K562 (cell line): ENCODE measurements at regions of chr1 and their contacts with region 1.

Region 1: GRCh38 chr1:44377925-44378784 is 23.1 kb upstream of the ERI3 start:
- DNase-seq: peak; percentile 60 to 74 (median 68)
- ATAC-seq: peak; percentile 89
- H3K4me3 ChIP-seq: no peak overlapping the region
- H3K27ac ChIP-seq: no peak overlapping the region
- H3K4me1 ChIP-seq: no peaks in the 10 kb centered on the region
- H3K27me3 ChIP-seq: peaks cover 4 to 26% of the 10 kb centered on the region in 2 experiments; a peak in 4 of 5 replicates
- CTCF ChIP-seq: peak; percentile 87 to 95 (median 87)
- EP300 ChIP-seq: no peak
- POLR2A ChIP-seq: no peak
- RAD21 ChIP-seq: peak; percentile 83 to 95

Region 2: GRCh38 chr1:44089371-44090049 is 288.6 kb before region 1 on chr1:
- CTCF ChIA-PET with region 1: no interaction called
- POLR2A ChIA-PET with region 1: no interaction called
- in situ Hi-C with region 1: no loop called
- intact Hi-C with region 1: loop called (anchors 10 kb)
- DNase-seq: peak in 1 of 4 experiments; percentile 46
- ATAC-seq: peak; percentile 56
- H3K4me3 ChIP-seq: no peak overlapping the region
- H3K27ac ChIP-seq: no peak overlapping the region
- H3K4me1 ChIP-seq: peaks cover 3 to 19% of the 10 kb centered on the region in 2 experiments; a peak in 3 of 5 replicates
- H3K27me3 ChIP-seq: no peaks in the 10 kb centered on the region; a peak in 1 of 5 replicates
- CTCF ChIP-seq: no peak
- EP300 ChIP-seq: no peak
- POLR2A ChIP-seq: no peak
- RAD21 ChIP-seq: no peak

Region 3: GRCh38 chr1:44390277-44390676 is 12.1 kb after region 1 on chr1:
- CTCF ChIA-PET with region 1: no interaction called
- POLR2A ChIA-PET with region 1: interaction called, 11 read pairs
- in situ Hi-C with region 1: no loop called
- intact Hi-C with region 1: no loop called
- DNase-seq: no peak
- ATAC-seq: no peak
- H3K4me3 ChIP-seq: no peak overlapping the region
- H3K27ac ChIP-seq: no peak overlapping the region
- H3K4me1 ChIP-seq: no peaks in the 10 kb centered on the region
- H3K27me3 ChIP-seq: peaks cover 27 to 33% of the 10 kb centered on the region in 2 experiments
- CTCF ChIP-seq: no peak
- EP300 ChIP-seq: no peak
- POLR2A ChIP-seq: no peak
- RAD21 ChIP-seq: no peak

Region 4: GRCh38 chr1:44500181-44501046 is 122.3 kb after region 1 on chr1:
- CTCF ChIA-PET with region 1: interaction called, 11 read pairs
- POLR2A ChIA-PET with region 1: no interaction called
- in situ Hi-C with region 1: no loop called
- intact Hi-C with region 1: loop called (anchors 1 kb)
- DNase-seq: peak in 3 of 4 experiments; percentile 37 to 49 (median 44)
- ATAC-seq: peak; percentile 84
- H3K4me3 ChIP-seq: no peak overlapping the region
- H3K27ac ChIP-seq: no peak overlapping the region
- H3K4me1 ChIP-seq: no peaks in the 10 kb centered on the region
- H3K27me3 ChIP-seq: peaks cover 63 to 78% of the 10 kb centered on the region in 2 experiments
- CTCF ChIP-seq: peak; percentile 49 to 69 (median 67)
- EP300 ChIP-seq: no peak
- POLR2A ChIP-seq: no peak
- RAD21 ChIP-seq: peak; percentile 29 to 60

Region 5: GRCh38 chr1:44571712-44572571 is 193.8 kb after region 1 on chr1:
- CTCF ChIA-PET with region 1: no interaction called
- POLR2A ChIA-PET with region 1: interaction called, 3 read pairs
- in situ Hi-C with region 1: loop called (anchors 10 kb)
- intact Hi-C with region 1: no loop called
- DNase-seq: peak; percentile 58 to 62 (median 60)
- ATAC-seq: peak; percentile 85
- H3K4me3 ChIP-seq: no peak overlapping the region
- H3K27ac ChIP-seq: no peak overlapping the region
- H3K4me1 ChIP-seq: no peaks in the 10 kb centered on the region
- H3K27me3 ChIP-seq: peaks cover 43 to 49% of the 10 kb centered on the region in 2 experiments
- CTCF ChIP-seq: peak; percentile 56 to 71 (median 65)
- EP300 ChIP-seq: no peak
- POLR2A ChIP-seq: no peak
- RAD21 ChIP-seq: peak in 1 of 2 experiments; percentile 62; a peak in 2 of 4 replicates